CD14-positive monocyte (primary cell): ENCODE measurements at regions of chr10 and their contacts with region 1.

Region 1: DNA sequence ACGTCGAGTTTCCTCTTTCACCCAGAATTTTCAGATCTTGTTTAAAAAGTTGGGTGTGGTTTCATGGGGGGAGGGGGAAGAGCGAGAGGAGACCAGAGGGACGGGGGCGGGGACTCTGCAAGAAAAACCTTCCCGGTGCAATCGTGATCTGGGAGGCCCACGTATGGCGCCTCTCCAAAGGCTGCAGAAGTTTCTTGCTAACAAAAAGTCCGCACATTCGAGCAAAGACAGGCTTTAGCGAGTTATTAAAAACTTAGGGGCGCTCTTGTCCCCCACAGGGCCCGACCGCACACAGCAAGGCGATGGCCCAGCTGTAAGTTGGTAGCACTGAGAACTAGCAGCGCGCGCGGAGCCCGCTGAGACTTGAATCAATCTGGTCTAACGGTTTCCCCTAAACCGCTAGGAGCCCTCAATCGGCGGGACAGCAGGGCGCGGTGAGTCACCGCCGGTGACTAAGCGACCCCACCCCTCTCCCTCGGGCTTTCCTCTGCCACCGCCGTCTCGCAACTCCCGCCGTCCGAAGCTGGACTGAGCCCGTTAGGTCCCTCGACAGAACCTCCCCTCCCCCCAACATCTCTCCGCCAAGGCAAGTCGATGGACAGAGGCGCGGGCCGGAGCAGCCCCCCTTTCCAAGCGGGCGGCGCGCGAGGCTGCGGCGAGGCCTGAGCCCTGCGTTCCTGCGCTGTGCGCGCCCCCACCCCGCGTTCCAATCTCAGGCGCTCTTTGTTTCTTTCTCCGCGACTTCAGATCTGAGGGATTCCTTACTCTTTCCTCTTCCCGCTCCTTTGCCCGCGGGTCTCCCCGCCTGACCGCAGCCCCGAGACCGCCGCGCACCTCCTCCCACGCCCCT is at the start of gene VIM:
- DNase-seq: peak; percentile 98 to 100 (median 98)
- H3K4me3 ChIP-seq: peak within 1 kb of the TSS; percentile 77 to 100 (median 97)
- H3K4me3 Mint-ChIP-seq: peak within 1 kb of the TSS; percentile 96 to 99
- H3K27ac ChIP-seq: peak within 1 kb of the TSS; percentile 98 to 100
- H3K27ac Mint-ChIP-seq: peak within 1 kb of the TSS; percentile 99 to 100 (median 99)
- H3K4me1 ChIP-seq: peaks cover 40 to 54% of the 10 kb centered on the region in 2 donors
- H3K4me1 Mint-ChIP-seq: peaks cover 47% of the 10 kb centered on the region
- H3K27me3 ChIP-seq: no peaks in the 10 kb centered on the region
- H3K27me3 Mint-ChIP-seq: peaks cover 0 to 16% (median 2%) of the 10 kb centered on the region in 3 donors
- CTCF ChIP-seq: no peak
- polyA plus RNA-seq, gene VIM: 697 to 4,055 (median 932) TPM

Region 2: GRCh38 chr10:16904639-16905061 is 323.7 kb before region 1 on chr10:
- intact Hi-C with region 1: loop called in 1 of 2 experiments (anchors 10 kb)
- DNase-seq: peak in 1 of 3 donors; percentile 14
- H3K4me3 ChIP-seq: no peak overlapping the region
- H3K4me3 Mint-ChIP-seq: no peak overlapping the region
- H3K27ac ChIP-seq: no peak overlapping the region
- H3K27ac Mint-ChIP-seq: no peak overlapping the region
- H3K4me1 ChIP-seq: peaks cover 8 to 13% of the 10 kb centered on the region in 2 donors
- H3K4me1 Mint-ChIP-seq: peaks cover 19% of the 10 kb centered on the region
- H3K27me3 ChIP-seq: no peaks in the 10 kb centered on the region
- H3K27me3 Mint-ChIP-seq: no peaks in the 10 kb centered on the region
- CTCF ChIP-seq: no peak

Region 3: DNA sequence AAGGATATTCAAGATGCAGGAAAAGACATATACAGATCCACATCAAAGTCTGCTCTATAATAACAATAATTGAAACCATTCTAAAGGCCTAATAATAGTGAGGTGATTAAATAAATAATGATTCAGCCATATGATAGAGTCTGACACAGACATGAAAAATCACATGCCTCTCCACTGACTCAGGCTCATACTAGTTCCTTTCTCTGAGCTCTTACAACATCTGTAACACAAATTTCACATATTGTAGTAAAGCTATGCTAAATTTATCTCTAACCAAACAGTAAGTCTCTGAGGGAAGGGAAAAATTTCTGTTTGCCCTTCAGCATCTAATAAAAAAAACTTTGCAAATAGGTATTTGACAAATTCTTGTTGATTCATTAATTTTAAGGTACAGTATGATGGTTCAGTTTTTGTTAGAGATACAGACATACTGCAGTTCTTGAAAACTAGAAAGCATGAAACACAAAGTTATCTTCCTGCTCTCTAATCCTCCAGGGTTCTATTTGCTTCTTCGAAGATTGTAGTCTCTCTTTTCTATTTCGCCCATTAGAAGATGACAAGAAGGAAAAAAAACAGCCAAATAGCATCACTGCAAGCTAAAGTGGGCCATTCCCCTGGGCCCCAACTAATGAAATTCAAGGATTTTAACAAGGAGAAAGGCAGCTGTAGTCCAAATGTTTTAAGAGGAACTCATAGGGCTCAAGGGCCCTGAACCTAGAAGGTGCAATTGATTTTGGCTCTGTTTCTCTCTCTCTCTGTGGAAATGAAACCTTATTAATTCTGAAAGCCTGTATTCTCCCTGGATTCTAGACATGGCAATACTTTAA is 152.6 kb before region 1 on chr10:
- intact Hi-C with region 1: loop called in 1 of 2 experiments (anchors 5 kb)
- DNase-seq: peak; percentile 83 to 96 (median 93)
- H3K4me3 ChIP-seq: no peak overlapping the region
- H3K4me3 Mint-ChIP-seq: peak overlapping the region in 1 of 2 donors; percentile 35
- H3K27ac ChIP-seq: peak overlapping the region; percentile 72 to 88
- H3K27ac Mint-ChIP-seq: peak overlapping the region; percentile 91 to 99 (median 97)
- H3K4me1 ChIP-seq: peaks cover 20 to 32% of the 10 kb centered on the region in 2 donors
- H3K4me1 Mint-ChIP-seq: peaks cover 44% of the 10 kb centered on the region
- H3K27me3 ChIP-seq: no peaks in the 10 kb centered on the region
- H3K27me3 Mint-ChIP-seq: peaks cover 0 to 6% (median 2%) of the 10 kb centered on the region in 3 donors
- CTCF ChIP-seq: no peak

Region 4: GRCh38 chr10:17144757-17145156 is 83.6 kb before region 1 on chr10:
- intact Hi-C with region 1: no loop called
- DNase-seq: no peak
- H3K4me3 ChIP-seq: no peak overlapping the region
- H3K4me3 Mint-ChIP-seq: no peak overlapping the region
- H3K27ac ChIP-seq: no peak overlapping the region
- H3K27ac Mint-ChIP-seq: no peak overlapping the region
- H3K4me1 ChIP-seq: no peaks in the 10 kb centered on the region
- H3K4me1 Mint-ChIP-seq: peaks cover 3% of the 10 kb centered on the region
- H3K27me3 ChIP-seq: no peaks in the 10 kb centered on the region
- H3K27me3 Mint-ChIP-seq: peaks cover 0 to 2% (median 0%) of the 10 kb centered on the region in 3 donors
- CTCF ChIP-seq: no peak

Region 5: GRCh38 chr10:17216217-17216900 is 12.0 kb before region 1 on chr10:
- intact Hi-C with region 1: loop called (anchors 1 to 2 kb)
- DNase-seq: peak; percentile 96 to 100 (median 99)
- H3K4me3 ChIP-seq: peak overlapping the region in 1 of 3 experiments; percentile 23
- H3K4me3 Mint-ChIP-seq: peak overlapping the region; percentile 37 to 71
- H3K27ac ChIP-seq: peak overlapping the region; percentile 100
- H3K27ac Mint-ChIP-seq: peak overlapping the region; percentile 98 to 100 (median 99)
- H3K4me1 ChIP-seq: peaks cover 63 to 66% of the 10 kb centered on the region in 2 donors
- H3K4me1 Mint-ChIP-seq: peaks cover 68% of the 10 kb centered on the region
- H3K27me3 ChIP-seq: no peaks in the 10 kb centered on the region
- H3K27me3 Mint-ChIP-seq: no peaks in the 10 kb centered on the region
- CTCF ChIP-seq: no peak

Region 6: GRCh38 chr10:17273403-17273802 is 45.1 kb after region 1 on chr10:
- intact Hi-C with region 1: no loop called
- DNase-seq: no peak
- H3K4me3 ChIP-seq: no peak overlapping the region
- H3K4me3 Mint-ChIP-seq: no peak overlapping the region
- H3K27ac ChIP-seq: no peak overlapping the region
- H3K27ac Mint-ChIP-seq: no peak overlapping the region
- H3K4me1 ChIP-seq: no peaks in the 10 kb centered on the region
- H3K4me1 Mint-ChIP-seq: no peaks in the 10 kb centered on the region
- H3K27me3 ChIP-seq: no peaks in the 10 kb centered on the region
- H3K27me3 Mint-ChIP-seq: peaks cover 0 to 6% (median 0%) of the 10 kb centered on the region in 3 donors
- CTCF ChIP-seq: no peak